Naive thymus-derived CD8-positive, alpha-beta T cell (primary cell): ENCODE measurements at regions of chr20 and their contacts with region 1.

Region 1: GRCh38 chr20:53594068-53595017 is 704 bp upstream of the ZNF217 start:
- DNase-seq: peak; percentile 91 to 100 (median 97)
- ATAC-seq: peak; percentile 58 to 67
- H3K4me3 Mint-ChIP-seq: peak overlapping the region; percentile 82 to 98 (median 90)
- H3K27ac Mint-ChIP-seq: peak overlapping the region; percentile 88 to 99 (median 96)
- H3K4me1 Mint-ChIP-seq: peaks cover 31 to 71% (median 57%) of the 10 kb centered on the region in 4 donors
- H3K27me3 Mint-ChIP-seq: no peaks in the 10 kb centered on the region

Region 2: GRCh38 chr20:53578492-53579222 is 15.7 kb before region 1 on chr20:
- POLR2A ChIA-PET with region 1: interaction called, 88 read pairs
- DNase-seq: peak in 9 of 10 donors; percentile 51 to 89 (median 74)
- ATAC-seq: peak; percentile 33 to 49
- H3K4me3 Mint-ChIP-seq: peak overlapping the region; percentile 79 to 94 (median 92)
- H3K27ac Mint-ChIP-seq: peak overlapping the region; percentile 91 to 99 (median 96)
- H3K4me1 Mint-ChIP-seq: peaks cover 31 to 94% (median 82%) of the 10 kb centered on the region in 4 donors
- H3K27me3 Mint-ChIP-seq: no peaks in the 10 kb centered on the region

Region 3: GRCh38 chr20:53623454-53624211 is 29.3 kb after region 1 on chr20:
- POLR2A ChIA-PET with region 1: interaction called, 40 read pairs
- DNase-seq: peak in 4 of 10 donors; percentile 5 to 37 (median 20)
- ATAC-seq: peak; percentile 63 to 74
- H3K4me3 Mint-ChIP-seq: peak overlapping the region; percentile 76 to 90 (median 82)
- H3K27ac Mint-ChIP-seq: peak overlapping the region; percentile 89 to 98 (median 94)
- H3K4me1 Mint-ChIP-seq: peaks cover 14 to 52% (median 49%) of the 10 kb centered on the region in 4 donors
- H3K27me3 Mint-ChIP-seq: no peaks in the 10 kb centered on the region

Region 4: DNA sequence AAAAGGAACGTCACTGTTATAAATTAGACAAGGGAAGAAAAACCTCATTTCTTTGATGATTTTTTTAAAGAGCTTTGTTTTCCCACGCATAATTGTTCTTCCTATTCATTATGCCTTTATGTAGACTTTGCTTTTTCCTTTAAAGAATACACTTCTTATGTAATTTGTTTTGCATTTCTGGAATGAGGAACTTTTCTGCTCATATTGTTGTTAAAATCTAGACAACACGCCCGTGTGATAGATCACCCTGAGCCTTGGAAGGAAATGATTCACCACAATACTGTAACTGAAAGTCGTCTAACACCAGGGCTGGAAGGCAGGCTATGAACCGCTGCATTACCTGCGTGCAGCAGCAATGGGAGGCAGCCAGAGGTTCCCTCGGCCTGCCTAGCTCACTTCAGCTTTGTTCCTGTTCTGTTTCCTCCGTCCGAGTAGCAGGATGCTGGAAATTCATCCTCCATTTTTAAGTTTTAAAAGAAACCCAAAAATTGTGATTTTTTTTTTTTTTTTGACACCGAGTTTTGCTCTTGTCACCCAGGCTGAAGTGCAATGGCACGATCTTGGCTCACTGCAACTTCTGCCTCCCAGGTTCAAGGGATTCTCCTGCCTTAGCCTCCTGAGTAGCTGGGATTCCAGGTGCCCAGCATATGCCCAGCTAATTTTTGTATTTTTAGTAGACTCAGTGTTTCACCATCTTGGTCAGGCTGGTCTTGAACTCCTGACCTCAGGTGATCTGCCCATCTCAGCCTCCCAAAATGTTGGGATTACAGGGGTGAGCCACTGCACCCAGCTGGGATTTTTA is 48.9 kb after region 1 on chr20:
- POLR2A ChIA-PET with region 1: interaction called, 34 read pairs
- DNase-seq: peak; percentile 44 to 80 (median 62)
- ATAC-seq: peak; percentile 94 to 97
- H3K4me3 Mint-ChIP-seq: peak overlapping the region; percentile 70 to 94 (median 84)
- H3K27ac Mint-ChIP-seq: peak overlapping the region; percentile 94 to 99 (median 97)
- H3K4me1 Mint-ChIP-seq: peaks cover 26 to 57% (median 51%) of the 10 kb centered on the region in 4 donors
- H3K27me3 Mint-ChIP-seq: no peaks in the 10 kb centered on the region

Region 5: DNA sequence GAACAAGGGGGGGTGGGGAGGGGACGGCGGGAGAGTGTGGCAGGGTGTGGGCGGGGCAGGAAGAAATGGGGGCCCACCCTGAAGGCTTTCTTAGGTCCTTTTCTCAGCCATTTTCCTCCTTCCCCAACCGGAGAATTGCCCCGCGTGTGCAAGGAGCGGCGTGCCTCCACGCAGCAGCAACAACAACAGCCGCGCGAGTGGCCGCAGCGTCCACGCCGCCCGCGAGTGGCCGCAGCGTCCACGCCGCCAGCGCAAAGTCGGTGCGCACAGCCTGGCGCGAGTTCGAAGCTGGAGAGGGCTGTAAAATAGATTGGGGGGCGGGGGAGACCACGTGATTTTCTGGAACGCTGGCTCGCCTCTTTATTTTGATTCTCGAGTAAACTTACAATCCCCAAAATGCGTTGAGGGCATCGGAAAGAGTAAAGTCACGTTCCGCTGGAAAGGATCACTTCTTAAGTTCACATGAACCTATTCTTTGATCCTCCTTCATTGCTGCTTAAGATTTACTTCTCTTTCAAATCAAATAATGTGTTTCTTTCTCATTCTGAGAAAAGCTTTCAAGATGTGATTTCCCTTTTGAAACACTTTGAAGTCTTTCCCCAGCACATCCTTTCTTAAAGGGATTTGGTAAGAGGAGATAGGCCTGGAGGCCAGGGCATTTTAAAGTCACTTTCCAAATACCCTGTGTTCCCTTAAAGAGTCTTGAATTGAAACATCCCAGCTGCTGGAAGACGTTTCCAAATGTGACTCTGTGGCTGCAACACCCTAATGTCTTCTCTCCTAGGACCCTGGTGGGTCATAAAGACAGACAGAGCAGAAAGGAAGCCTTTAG is 66.0 kb after region 1 on chr20:
- POLR2A ChIA-PET with region 1: interaction called, 23 read pairs
- DNase-seq: peak in 8 of 10 donors; percentile 13 to 52 (median 32)
- ATAC-seq: peak; percentile 42 to 48
- H3K4me3 Mint-ChIP-seq: peak overlapping the region; percentile 81 to 93 (median 86)
- H3K27ac Mint-ChIP-seq: peak overlapping the region; percentile 82 to 96 (median 92)
- H3K4me1 Mint-ChIP-seq: peaks cover 18 to 70% (median 66%) of the 10 kb centered on the region in 4 donors
- H3K27me3 Mint-ChIP-seq: no peaks in the 10 kb centered on the region

Region 6: DNA sequence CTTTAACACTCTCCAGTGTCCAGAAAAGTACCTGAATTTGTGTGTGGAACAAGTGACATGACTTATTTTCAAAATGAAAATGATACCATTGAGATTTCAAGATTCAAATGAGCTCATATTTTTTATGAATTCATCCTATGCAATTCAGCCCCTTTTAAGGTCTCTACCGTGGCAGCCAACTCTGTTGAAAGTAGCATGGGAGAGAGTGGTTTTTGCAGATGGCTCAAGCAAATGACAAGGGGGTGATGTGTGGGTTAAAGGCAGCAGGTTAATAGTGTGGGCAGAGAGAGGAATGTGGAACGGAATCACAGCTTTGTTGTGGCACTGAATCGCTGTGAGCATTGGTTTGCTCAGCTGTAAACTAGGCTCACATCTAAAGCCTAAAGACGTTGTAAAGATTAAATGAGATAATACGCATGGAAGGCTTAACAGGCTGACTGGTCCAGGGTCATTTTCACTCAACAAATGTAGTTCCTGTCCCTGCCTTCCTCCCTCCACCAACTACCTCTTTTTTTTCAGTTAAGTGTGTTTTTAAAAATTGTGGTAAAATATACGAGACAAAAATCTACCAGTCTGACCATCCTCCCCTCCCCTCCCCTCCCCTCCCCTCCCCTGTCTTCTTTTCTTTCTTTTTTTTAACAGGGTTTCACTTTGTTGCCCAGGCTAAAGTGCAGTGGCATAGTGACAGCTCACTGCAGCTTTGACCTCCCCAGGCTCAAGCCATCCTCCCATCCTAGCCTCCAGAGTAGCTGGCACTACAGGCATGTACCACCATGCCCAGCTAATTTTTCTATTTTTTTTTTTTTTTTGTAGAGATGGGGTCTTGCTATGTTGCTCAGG is 114.0 kb after region 1 on chr20:
- POLR2A ChIA-PET with region 1: interaction called, 10 read pairs
- DNase-seq: peak in 4 of 10 donors; percentile 16 to 39 (median 26)
- ATAC-seq: peak; percentile 58 to 66
- H3K4me3 Mint-ChIP-seq: peak overlapping the region; percentile 31 to 85 (median 71)
- H3K27ac Mint-ChIP-seq: peak overlapping the region; percentile 81 to 99 (median 96)
- H3K4me1 Mint-ChIP-seq: peaks cover 23 to 66% (median 53%) of the 10 kb centered on the region in 4 donors
- H3K27me3 Mint-ChIP-seq: no peaks in the 10 kb centered on the region

Region 7: DNA sequence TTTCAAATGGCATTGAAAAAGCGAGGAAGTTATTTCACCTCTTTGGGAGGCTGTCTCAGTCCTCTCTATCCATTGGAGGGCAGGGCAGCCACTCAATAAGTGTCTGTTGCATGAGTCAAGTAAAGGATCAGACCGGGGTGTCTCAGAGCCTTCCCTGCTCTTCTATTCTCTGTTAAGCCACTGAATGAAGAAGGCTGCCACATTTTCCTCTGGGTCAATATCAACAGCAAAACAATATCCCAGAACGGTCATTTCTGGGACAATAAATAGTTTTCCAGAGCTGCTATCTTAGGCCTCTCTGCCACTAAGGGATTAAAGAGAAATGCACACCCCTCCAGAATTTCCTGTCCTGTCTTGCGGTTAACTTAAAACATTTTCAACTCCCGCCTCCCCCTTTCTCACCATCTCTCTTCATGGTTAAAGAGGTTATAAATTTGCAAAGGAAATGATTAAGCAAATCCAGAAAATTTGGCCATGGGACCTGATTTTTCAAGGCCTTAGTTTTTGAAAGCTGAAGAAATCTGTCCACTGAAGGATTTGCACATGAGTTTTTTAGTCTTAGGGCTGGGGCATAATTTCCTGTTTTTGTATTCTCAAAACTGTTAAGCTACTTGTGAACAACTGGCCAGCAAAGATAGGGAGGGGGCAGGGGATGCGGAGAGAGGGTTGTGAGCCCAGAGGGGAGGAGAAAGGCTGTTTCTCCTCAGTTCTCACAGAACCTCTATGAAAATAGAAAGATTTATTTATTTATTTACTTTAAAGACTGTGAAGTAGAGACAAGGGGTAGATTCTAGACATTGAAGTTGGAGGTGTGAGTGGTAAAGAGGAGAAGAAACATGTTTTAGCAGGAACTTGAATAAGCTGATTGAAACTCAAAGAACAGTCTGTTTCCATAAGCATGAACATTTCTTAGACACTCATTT is 340.3 kb after region 1 on chr20:
- POLR2A ChIA-PET with region 1: interaction called, 13 read pairs
- DNase-seq: peak in 3 of 10 donors; percentile 24 to 31 (median 28)
- ATAC-seq: peak; percentile 69 to 73
- H3K4me3 Mint-ChIP-seq: peak overlapping the region; percentile 38 to 80 (median 74)
- H3K27ac Mint-ChIP-seq: peak overlapping the region; percentile 41 to 94 (median 78)
- H3K4me1 Mint-ChIP-seq: peaks cover 30 to 80% (median 47%) of the 10 kb centered on the region in 4 donors
- H3K27me3 Mint-ChIP-seq: no peaks in the 10 kb centered on the region